Calu3 (cell line): ENCODE measurements at regions of chr9 and their contacts with region 1.

Region 1: DNA sequence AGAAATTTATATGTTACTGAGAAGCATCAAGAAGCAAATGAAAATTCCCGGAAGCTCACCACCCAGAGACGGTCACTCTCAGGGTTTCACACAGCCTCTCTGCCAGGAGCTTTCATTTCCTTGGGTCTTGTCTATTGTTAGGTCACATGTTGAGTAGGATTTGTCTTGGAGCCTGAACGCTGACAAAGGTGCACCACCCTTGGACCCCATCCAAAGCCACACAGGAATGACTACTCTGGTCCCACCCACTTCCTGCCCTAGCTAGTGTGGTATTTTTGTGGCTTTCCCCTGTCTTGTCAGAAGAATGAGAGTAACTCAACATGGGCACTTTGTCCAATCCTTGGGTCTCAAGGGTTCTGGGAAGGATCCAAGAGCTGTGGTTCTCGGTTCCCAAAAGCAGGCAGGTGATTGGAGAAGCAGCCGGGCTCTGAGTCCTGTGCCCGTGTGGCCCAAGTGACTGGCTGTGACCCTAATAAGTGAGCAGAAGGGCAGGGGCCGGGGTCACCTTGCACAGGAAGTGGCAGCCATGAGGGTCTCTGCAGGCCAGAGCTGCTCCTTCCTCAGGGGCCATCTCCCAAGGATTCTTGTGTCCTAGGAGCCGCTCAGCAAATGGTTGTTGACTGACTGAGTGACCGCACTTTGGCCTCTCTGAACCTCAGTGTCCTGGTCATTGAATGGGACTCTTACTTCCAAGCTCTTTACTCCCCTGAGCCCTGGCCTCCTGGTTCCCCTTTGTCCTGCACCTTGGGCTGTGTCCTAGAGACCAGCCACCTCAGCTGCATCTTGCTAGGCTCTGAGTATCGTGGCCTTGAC is 6.9 kb downstream of the FGD3 start:
- DNase-seq: peak; percentile 79
- H3K4me3 Mint-ChIP-seq: peak overlapping the region; percentile 48
- H3K27ac Mint-ChIP-seq: peak overlapping the region; percentile 58
- H3K4me1 Mint-ChIP-seq: peaks cover 12% of the 10 kb centered on the region
- H3K27me3 Mint-ChIP-seq: no peaks in the 10 kb centered on the region
- CTCF ChIP-seq: no peak

Region 2: DNA sequence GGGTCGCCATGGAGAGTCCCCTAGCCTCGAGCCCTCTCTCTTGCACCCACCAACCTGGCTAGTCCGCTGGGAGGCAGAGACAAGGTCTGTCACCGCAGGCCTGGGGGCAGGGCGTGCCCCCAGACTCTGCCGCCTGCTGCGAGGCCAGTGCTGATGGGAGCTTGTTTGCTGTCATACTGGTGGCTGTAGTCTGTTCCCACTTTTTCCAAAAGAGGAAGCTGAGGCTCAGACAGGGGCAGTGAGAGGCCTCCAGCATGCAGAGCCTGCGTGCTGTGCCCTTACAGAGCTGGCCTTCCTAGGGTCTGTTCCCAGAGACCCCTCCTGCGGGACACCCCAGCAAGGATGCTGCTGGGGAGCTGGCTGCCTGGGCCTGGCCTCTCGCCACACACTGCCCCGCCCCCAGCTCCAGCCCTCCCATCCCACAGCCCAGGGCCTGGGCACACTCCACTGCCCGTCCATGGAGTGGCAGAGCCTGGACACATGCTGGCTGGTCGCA is 83.3 kb after region 1 on chr9:
- CTCF ChIA-PET with region 1: no interaction called
- intact Hi-C with region 1: no loop called
- DNase-seq: no peak
- H3K4me3 Mint-ChIP-seq: no peak overlapping the region
- H3K27ac Mint-ChIP-seq: no peak overlapping the region
- H3K4me1 Mint-ChIP-seq: no peaks in the 10 kb centered on the region
- H3K27me3 Mint-ChIP-seq: no peaks in the 10 kb centered on the region
- CTCF ChIP-seq: no peak

Region 3: DNA sequence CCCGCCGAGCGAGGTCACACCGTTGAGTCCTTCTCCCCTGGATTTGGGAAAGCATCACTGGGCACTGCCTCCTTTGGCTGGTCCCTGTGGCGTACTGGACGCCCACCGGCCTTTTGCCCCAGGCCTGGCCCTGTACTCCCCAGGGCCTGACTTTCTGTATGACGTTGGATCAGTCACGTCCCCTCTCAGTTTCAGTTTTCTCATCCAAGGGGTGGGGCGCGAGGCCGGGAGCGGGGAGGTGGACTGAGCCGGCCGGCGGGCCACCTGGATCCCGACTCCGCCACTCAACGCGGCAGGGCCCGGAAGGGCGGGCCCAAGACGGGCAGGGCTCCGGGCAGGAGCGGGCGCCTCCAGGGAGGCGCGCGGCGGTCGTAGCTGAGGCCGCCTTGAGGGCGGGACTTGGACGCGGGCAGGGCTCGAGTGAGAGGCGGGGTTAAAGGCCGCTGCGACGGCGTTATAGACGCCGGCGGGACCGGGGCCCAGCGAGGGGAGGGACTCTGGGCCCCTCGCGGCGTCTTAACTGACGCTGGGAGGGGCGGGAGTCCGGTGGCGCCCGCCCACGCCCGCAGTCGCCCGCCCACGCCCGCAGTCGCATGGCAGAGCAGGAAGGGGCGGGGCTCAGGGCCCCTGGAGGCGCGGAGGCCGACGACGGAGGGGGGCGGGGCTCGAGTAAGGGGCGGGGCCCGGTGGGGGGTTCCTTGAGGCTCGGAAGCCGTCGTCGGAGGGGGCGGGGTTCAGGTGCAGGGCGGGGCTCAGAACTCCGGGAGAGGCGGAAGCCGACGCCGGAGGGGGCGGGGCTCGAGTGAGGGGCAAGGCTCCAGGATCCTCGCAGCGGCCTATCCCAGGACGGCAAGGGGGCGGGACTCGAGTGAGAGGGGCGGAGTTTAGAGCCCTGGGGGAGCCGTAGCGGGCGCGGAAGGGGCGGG is 141.2 kb after region 1 on chr9:
- CTCF ChIA-PET with region 1: no interaction called
- intact Hi-C with region 1: loop called (anchors 10 kb)
- DNase-seq: peak; percentile 98
- H3K4me3 Mint-ChIP-seq: peak overlapping the region; percentile 86
- H3K27ac Mint-ChIP-seq: peak overlapping the region; percentile 86
- H3K4me1 Mint-ChIP-seq: peaks cover 47% of the 10 kb centered on the region
- H3K27me3 Mint-ChIP-seq: no peaks in the 10 kb centered on the region
- CTCF ChIP-seq: no peak